ENCODE measurements at regions of chr7 and their contacts with region 1.

Region 1: DNA sequence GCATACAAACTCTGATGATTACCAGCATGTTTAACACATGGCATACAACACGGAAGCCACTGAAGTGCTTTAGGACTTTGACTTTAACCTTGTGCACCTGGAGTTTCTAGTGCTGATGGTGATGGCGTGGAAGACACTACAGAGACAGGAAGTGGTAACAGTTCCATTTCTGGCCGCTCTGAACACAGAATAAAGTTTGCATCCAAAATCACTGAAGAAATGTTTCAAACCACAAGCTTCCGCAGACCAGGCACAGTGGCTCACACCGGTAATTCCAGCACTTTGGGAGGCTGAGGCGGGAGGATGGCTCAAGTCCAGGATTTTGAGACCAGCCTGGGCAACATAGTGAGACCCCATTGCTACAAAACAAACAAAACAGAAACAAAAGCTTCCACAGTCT is 40.3 kb upstream of the TNPO3 start:
- DNase-seq: peak in 7 of 10 donors; percentile 9 to 67 (median 42)
- ATAC-seq: peak; percentile 83 to 98
- H3K4me3 Mint-ChIP-seq: peak overlapping the region in 9 of 10 donors; percentile 31 to 70 (median 51)
- H3K27ac Mint-ChIP-seq: peak overlapping the region; percentile 65 to 95 (median 90)
- H3K4me1 Mint-ChIP-seq: peaks cover 9 to 26% (median 20%) of the 10 kb centered on the region in 4 donors
- H3K27me3 Mint-ChIP-seq: no peaks in the 10 kb centered on the region

Region 2: GRCh38 chr7:129054438-129055293 is 40.6 kb before region 1 on chr7 and contains the start of gene TNPO3:
- POLR2A ChIA-PET with region 1: interaction called, 10 read pairs
- DNase-seq: peak; percentile 78 to 92 (median 86)
- ATAC-seq: peak; percentile 86 to 89
- H3K4me3 Mint-ChIP-seq: peak within 1 kb of the TSS; percentile 95 to 100 (median 99)
- H3K27ac Mint-ChIP-seq: peak within 1 kb of the TSS; percentile 97 to 100 (median 99)
- H3K4me1 Mint-ChIP-seq: peaks cover 16 to 46% (median 37%) of the 10 kb centered on the region in 4 donors
- H3K27me3 Mint-ChIP-seq: peaks cover 3 to 7% (median 4%) of the 10 kb centered on the region in 5 donors
- polyA plus RNA-seq, gene TNPO3: 30.3 to 36.3 (median 33.8) TPM

Region 3: GRCh38 chr7:129240119-129240815 is 145.0 kb after region 1 on chr7:
- POLR2A ChIA-PET with region 1: no interaction called
- DNase-seq: no peak
- ATAC-seq: no peak
- H3K4me3 Mint-ChIP-seq: no peak overlapping the region
- H3K27ac Mint-ChIP-seq: peak overlapping the region in 2 of 10 donors; percentile 25 to 28
- H3K4me1 Mint-ChIP-seq: peaks cover 0 to 24% (median 15%) of the 10 kb centered on the region in 4 donors
- H3K27me3 Mint-ChIP-seq: no peaks in the 10 kb centered on the region

Measured in naive thymus-derived CD8-positive, alpha-beta T cell (primary cell).